ENCODE measurements at regions of chr1 and their contacts with region 1.

Region 1: GRCh38 chr1:40774266-40774998 is 9.2 kb upstream of the KCNQ4 start:
- DNase-seq: peak; percentile 49 to 63 (median 56)
- H3K4me3 ChIP-seq: no peak overlapping the region
- H3K27ac ChIP-seq: no peak overlapping the region
- H3K4me1 ChIP-seq: peaks cover 8 to 14% (median 12%) of the 10 kb centered on the region in 4 experiments
- H3K27me3 ChIP-seq: no peaks in the 10 kb centered on the region

Region 2: DNA sequence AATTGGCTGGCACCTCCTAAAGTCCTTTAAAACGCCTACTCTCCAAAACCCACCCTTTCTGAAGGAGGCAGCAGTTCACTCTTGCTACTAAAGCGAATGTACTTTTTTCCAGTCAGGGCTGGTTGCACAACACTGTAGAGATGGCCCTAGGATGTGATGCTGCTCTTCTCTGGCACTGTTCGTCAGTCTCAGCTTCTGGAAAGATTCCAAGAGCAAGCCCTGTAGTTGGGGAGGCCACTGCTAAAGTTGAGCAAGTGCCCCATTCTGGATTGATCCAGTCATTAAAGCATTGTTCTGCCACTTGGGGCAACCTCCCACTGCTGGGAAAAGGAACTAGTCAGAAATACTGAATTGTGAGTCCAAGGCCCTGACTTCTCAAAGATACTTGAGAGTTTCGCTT is 19.4 kb before region 1 on chr1:
- CTCF ChIA-PET with region 1: interaction called, 11 read pairs
- POLR2A ChIA-PET with region 1: no interaction called
- DNase-seq: peak in 1 of 3 donors; percentile 6
- H3K4me3 ChIP-seq: no peak overlapping the region
- H3K27ac ChIP-seq: no peak overlapping the region
- H3K4me1 ChIP-seq: no peaks in the 10 kb centered on the region
- H3K27me3 ChIP-seq: no peaks in the 10 kb centered on the region

Region 3: DNA sequence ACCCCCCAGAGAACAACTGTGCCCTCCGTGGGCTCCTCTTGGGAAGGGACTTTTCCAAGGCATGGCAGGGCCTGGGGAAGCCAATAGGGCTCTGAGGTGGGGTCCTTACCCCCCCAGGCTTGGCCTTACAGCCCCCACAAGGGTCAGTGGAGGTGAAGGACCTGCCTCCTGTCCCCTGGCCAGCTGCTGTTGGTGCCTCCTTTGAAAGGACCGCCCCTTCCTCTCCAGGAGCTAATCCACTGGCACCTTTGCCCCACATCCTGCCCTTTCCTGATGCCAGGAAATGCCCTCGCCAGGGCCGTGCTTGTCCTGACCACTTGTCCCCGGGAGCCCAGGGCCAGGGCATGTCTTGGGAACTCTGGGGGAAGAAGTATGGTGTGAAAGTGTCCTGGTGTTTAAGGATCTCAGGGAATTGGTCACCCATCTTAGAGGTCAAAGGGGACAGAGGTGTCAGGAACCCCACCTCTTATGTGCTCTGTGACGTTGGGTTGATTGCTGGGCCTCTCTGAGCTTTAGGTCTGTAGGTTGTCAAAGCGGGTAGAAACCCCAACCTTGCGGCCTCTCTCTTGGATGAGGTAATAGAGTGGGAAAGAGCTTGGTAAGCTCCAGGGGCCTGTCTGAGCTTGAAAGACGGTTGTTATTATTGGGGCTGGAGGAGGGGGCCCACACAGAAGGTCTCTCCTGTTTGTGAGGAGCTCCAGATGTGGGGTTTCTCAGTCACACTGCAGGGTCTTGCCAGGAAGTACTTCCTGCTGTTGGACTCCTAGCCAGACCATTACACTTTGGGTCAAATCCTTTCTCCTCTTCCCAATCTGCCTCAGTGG is 12.0 kb after region 1 on chr1:
- CTCF ChIA-PET with region 1: interaction called, 15 read pairs
- POLR2A ChIA-PET with region 1: no interaction called
- DNase-seq: no peak
- H3K4me3 ChIP-seq: no peak overlapping the region
- H3K27ac ChIP-seq: no peak overlapping the region
- H3K4me1 ChIP-seq: peaks cover 0 to 18% (median 11%) of the 10 kb centered on the region in 4 experiments
- H3K27me3 ChIP-seq: peaks cover 0 to 44% (median 9%) of the 10 kb centered on the region in 5 experiments

Region 4: DNA sequence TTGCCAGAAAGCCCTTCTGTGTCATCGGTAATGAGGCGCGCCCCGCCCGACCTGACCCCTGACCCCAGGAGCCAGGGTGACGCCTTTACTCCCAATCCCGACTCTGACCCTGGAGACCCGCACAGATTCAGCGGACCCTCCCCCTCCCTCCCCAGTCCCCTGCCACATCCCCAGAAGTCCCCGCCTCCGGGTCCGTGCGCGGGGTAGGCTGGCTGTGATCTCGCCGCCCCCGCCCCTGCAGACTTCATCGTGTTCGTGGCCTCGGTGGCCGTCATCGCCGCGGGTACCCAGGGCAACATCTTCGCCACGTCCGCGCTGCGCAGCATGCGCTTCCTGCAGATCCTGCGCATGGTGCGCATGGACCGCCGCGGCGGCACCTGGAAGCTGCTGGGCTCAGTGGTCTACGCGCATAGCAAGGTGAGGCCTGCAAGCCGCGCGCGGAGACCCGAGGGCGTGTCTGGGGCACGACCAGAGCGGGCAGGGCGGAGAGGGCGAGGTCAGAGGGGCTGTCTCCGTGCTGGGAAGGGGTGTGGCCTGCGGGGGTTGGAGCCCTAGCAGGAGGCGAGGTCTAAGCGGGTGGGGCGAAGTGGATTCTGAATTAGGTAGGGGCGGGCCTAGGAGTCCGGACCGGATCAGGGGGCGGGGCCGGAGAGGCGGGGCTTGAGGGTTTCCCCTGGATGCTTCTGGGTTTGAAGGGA is 44.0 kb after region 1 on chr1:
- CTCF ChIA-PET with region 1: interaction called, 21 read pairs
- POLR2A ChIA-PET with region 1: no interaction called
- DNase-seq: peak; percentile 69 to 81 (median 79)
- H3K4me3 ChIP-seq: peak overlapping the region in 6 of 7 experiments; percentile 38 to 69 (median 52)
- H3K27ac ChIP-seq: no peak overlapping the region
- H3K4me1 ChIP-seq: peaks cover 0 to 28% (median 20%) of the 10 kb centered on the region in 4 experiments
- H3K27me3 ChIP-seq: peaks cover 0 to 23% (median 16%) of the 10 kb centered on the region in 5 experiments

Region 5: GRCh38 chr1:40862008-40862863 is 87.8 kb after region 1 on chr1 and contains the start of gene CITED4:
- CTCF ChIA-PET with region 1: interaction called, 321 read pairs
- POLR2A ChIA-PET with region 1: no interaction called
- DNase-seq: peak; percentile 88 to 95 (median 94)
- H3K4me3 ChIP-seq: peak within 1 kb of the TSS; percentile 30 to 81 (median 67)
- H3K27ac ChIP-seq: peak within 1 kb of the TSS in 1 of 2 experiments; percentile 43
- H3K4me1 ChIP-seq: peaks cover 0 to 24% (median 22%) of the 10 kb centered on the region in 4 experiments
- H3K27me3 ChIP-seq: peaks cover 0 to 37% (median 8%) of the 10 kb centered on the region in 5 experiments